ENCODE measurements at regions of chr2 and their contacts with region 1.

Region 1: DNA sequence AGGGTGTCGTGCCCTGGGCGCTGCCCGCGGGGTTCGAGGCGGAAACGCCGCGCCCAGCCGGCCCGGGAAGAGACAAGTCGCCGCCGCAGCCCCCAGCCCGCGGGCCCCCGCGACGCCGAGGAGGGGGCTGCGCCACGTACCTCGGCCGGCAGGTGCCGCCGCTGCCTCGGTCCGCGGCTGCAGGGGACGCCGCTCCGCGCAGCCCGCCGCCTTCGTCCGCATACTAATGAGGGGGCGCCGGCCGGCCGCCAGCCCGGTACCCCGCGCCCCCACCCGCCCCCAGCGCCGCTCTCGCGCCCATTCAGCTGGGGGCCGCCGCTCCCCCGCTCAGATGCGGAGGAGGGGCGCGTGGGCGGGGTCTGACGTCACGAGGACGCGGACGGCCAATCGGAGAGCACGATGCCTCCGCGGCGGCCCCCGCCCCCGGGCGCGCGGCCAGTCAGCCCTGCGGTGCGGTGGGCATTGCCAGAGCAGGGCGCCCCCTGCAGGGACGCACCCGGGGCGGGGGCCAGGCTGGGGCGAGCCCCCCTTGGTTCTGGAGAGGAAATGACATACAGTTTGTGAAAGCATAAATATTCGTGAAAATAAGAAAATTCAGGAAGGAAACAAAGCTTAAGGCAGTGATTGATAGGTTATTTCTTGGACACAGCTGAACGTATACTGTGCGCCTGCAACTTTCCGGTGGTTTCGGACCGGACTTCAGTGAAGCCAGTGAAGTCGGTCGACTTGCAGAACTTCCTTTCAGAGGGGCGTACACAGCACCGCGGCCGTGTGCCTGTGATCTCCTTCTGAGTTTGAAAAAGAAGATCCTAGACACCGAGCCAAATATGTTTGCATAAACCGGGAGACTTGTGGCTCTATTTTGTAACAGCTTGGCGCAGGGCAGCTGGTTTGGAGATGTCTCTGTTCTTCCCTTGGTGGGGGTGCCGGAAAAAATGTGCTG is at the start of gene ST3GAL5:
- DNase-seq: peak; percentile 84 to 97 (median 92)
- ATAC-seq: peak; percentile 81
- H3K4me3 ChIP-seq: peak within 1 kb of the TSS; percentile 88
- H3K4me3 Mint-ChIP-seq: peak within 1 kb of the TSS; percentile 98
- H3K27ac ChIP-seq: peak within 1 kb of the TSS; percentile 69 to 81
- H3K27ac Mint-ChIP-seq: peak within 1 kb of the TSS; percentile 95
- H3K4me1 ChIP-seq: peaks cover 47% of the 10 kb centered on the region
- H3K4me1 Mint-ChIP-seq: peaks cover 65% of the 10 kb centered on the region
- H3K27me3 ChIP-seq: no peaks in the 10 kb centered on the region
- H3K27me3 Mint-ChIP-seq: no peaks in the 10 kb centered on the region
- CTCF ChIP-seq: peak; percentile 87
- total RNA-seq, gene ST3GAL5: 76.7 to 77.8 TPM

Region 2: DNA sequence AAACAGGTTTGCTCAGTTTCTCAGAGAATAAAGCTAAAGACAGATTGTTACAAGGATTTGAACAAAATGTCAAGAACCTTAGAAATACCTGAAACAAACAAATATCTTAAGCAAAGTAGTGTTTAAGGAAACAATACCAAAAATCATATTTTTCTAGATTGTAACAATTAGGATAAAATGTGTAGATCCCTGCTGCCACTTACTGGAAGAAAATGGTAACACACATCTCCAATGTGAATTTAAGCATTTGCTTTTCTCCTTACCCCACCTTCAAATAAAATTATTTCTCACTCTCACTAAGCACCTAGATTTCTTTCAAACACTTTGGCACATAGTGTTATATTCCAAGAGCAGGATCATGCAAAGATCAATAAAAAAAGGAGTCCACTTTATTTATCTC is 1464.8 kb before region 1 on chr2:
- CTCF ChIA-PET with region 1: no interaction called
- POLR2A ChIA-PET with region 1: no interaction called
- intact Hi-C with region 1: no loop called
- DNase-seq: peak in 2 of 14 experiments; percentile 6 to 9
- ATAC-seq: no peak
- H3K4me3 ChIP-seq: no peak overlapping the region
- H3K4me3 Mint-ChIP-seq: no peak overlapping the region
- H3K27ac ChIP-seq: no peak overlapping the region
- H3K27ac Mint-ChIP-seq: peak overlapping the region; percentile 0
- H3K4me1 ChIP-seq: no peaks in the 10 kb centered on the region
- H3K4me1 Mint-ChIP-seq: no peaks in the 10 kb centered on the region
- H3K27me3 ChIP-seq: no peaks in the 10 kb centered on the region
- H3K27me3 Mint-ChIP-seq: no peaks in the 10 kb centered on the region
- CTCF ChIP-seq: peak; percentile 49

Region 3: GRCh38 chr2:85826990-85827878 is 61.7 kb before region 1 on chr2:
- CTCF ChIA-PET with region 1: interaction called, 71 read pairs
- POLR2A ChIA-PET with region 1: interaction called, 38 read pairs
- intact Hi-C with region 1: loop called (anchors 1 to 2 kb)
- DNase-seq: peak; percentile 74 to 90 (median 81)
- ATAC-seq: peak; percentile 100
- H3K4me3 ChIP-seq: no peak overlapping the region
- H3K4me3 Mint-ChIP-seq: no peak overlapping the region
- H3K27ac ChIP-seq: peak overlapping the region in 1 of 2 donors; percentile 5
- H3K27ac Mint-ChIP-seq: peak overlapping the region; percentile 49
- H3K4me1 ChIP-seq: peaks cover 10% of the 10 kb centered on the region
- H3K4me1 Mint-ChIP-seq: peaks cover 22% of the 10 kb centered on the region
- H3K27me3 ChIP-seq: no peaks in the 10 kb centered on the region
- H3K27me3 Mint-ChIP-seq: peaks cover 3% of the 10 kb centered on the region
- CTCF ChIP-seq: peak; percentile 92

Region 4: DNA sequence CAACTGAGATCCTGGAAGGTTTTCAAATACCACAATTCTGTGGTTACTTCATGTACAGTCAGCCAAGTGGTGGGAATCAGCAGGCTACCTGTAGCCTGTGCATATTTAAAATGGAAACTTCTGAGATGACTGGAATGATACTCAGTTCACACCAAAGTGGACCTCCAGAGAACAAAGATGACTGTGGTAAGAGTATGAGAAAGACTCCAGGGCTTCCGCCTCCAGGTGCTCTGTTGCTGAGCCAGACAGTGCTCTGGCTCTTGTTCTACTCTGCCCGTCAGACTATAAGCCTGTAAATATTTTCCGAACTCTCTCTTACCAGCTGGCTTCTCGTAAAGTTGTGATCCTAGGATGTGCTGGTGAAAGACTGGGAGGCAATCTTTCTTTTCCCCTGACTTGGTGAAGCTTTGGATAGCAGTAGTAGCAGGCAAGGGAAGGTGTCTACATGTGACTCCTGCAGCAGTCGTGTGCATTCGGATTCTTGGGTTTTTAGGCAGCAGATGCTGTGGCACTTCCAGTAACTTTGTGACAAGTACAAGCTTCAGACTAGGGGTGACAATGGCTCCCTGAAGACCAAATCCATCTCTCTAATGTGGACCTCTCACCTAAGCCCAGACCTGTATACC is 23.3 kb before region 1 on chr2:
- CTCF ChIA-PET with region 1: interaction called, 11 read pairs
- POLR2A ChIA-PET with region 1: interaction called, 20 read pairs
- intact Hi-C with region 1: no loop called
- DNase-seq: peak in 2 of 14 experiments; percentile 17 to 19
- ATAC-seq: peak; percentile 36
- H3K4me3 ChIP-seq: no peak overlapping the region
- H3K4me3 Mint-ChIP-seq: no peak overlapping the region
- H3K27ac ChIP-seq: peak overlapping the region in 1 of 2 donors; percentile 10
- H3K27ac Mint-ChIP-seq: peak overlapping the region; percentile 56
- H3K4me1 ChIP-seq: peaks cover 34% of the 10 kb centered on the region
- H3K4me1 Mint-ChIP-seq: peaks cover 63% of the 10 kb centered on the region
- H3K27me3 ChIP-seq: no peaks in the 10 kb centered on the region
- H3K27me3 Mint-ChIP-seq: no peaks in the 10 kb centered on the region
- CTCF ChIP-seq: no peak

Region 5: DNA sequence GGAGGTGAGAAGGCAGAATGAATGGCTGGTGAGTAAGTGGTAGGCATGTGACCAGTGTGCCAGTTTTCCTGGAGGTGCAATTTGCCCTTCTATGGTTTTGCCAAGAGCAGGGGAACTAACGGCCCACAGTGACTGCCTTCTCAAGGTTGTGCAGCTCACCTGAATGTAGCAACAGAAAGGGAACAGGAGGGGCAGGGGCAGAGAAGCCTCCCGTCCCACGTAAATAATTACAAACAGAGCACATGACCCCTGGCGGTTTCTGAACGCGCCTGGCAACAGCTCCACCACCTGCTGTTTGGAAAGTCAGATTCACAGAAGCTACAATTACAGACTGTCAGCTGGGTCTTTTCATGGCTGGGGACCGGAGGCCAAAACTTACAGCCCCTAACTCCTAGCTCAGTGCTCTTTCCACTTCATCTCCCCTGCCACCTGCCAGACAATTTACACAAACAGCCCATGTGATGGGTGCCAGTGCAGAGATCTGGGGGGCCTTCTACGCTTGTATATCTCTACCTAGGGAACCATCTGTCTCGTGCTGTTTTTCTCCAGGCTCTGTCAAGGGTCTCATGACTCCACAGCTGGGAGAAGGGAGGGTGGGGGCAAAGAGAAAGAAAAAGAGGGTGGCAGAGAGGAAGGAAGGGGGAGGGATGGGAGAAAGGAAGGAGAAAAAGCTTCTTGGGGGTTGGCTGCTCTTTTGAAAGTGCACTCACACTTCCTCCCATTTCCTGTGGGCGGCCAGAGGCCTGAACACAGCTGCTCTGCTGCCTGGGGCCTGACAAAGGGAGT is 147.1 kb after region 1 on chr2:
- CTCF ChIA-PET with region 1: interaction called, 52 read pairs
- POLR2A ChIA-PET with region 1: interaction called, 75 read pairs
- intact Hi-C with region 1: loop called (anchors 1 to 2 kb)
- DNase-seq: peak; percentile 47 to 91 (median 68)
- ATAC-seq: peak; percentile 53
- H3K4me3 ChIP-seq: peak overlapping the region; percentile 29
- H3K4me3 Mint-ChIP-seq: peak overlapping the region; percentile 78
- H3K27ac ChIP-seq: peak overlapping the region; percentile 88 to 92
- H3K27ac Mint-ChIP-seq: peak overlapping the region; percentile 97
- H3K4me1 ChIP-seq: peaks cover 92% of the 10 kb centered on the region
- H3K4me1 Mint-ChIP-seq: peaks cover 72% of the 10 kb centered on the region
- H3K27me3 ChIP-seq: no peaks in the 10 kb centered on the region
- H3K27me3 Mint-ChIP-seq: peaks cover 3% of the 10 kb centered on the region
- CTCF ChIP-seq: peak; percentile 46

Region 6: DNA sequence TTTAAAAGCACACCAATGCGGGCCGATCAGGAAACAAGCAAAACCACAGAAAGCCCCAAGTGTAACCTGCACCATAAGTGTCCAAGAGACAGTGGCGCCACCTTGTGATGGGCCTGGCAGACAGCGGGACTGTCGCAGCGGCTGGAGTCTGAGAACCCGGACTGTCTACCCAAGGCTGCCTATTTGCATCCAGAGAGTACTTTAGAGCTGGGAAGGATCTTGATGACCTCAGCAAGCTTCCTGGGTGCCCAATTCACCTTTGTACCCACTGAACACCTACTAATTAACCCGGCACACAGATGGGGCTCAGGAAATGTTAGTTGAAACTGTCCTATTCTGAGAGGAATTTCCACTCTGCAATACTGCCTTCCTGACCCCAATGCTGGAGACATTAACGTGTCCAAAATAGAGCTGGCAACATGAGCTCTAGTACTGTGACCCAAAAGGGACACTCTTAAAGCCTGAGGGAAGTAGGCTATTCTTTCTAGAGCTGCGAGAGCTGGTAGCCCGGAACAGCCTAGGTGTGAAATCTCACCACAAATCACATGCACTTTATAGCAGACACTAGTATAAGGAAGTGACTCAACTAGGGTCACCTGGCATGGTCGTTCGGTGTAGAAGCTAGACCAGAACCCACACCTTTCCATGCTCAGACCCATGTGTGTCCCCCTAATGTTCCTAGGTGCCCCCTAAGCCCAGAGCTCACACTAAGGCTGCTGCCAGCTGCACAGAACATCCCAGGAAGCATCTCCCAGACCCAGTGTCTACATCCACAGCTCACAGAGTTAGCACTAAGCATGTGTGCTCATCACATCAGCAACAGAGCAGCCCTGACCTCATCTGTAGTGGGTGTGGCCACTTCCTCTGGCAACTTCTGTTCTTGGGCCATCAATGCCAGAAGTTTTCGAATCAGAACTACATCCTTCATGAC is 191.3 kb after region 1 on chr2:
- CTCF ChIA-PET with region 1: interaction called, 62 read pairs
- POLR2A ChIA-PET with region 1: interaction called, 27 read pairs
- intact Hi-C with region 1: loop called (anchors 1 to 2 kb)
- DNase-seq: peak; percentile 73 to 90 (median 82)
- ATAC-seq: peak; percentile 81
- H3K4me3 ChIP-seq: no peak overlapping the region
- H3K4me3 Mint-ChIP-seq: peak overlapping the region; percentile 31
- H3K27ac ChIP-seq: peak overlapping the region; percentile 16 to 56
- H3K27ac Mint-ChIP-seq: peak overlapping the region; percentile 87
- H3K4me1 ChIP-seq: peaks cover 26% of the 10 kb centered on the region
- H3K4me1 Mint-ChIP-seq: peaks cover 26% of the 10 kb centered on the region
- H3K27me3 ChIP-seq: no peaks in the 10 kb centered on the region
- H3K27me3 Mint-ChIP-seq: no peaks in the 10 kb centered on the region
- CTCF ChIP-seq: peak; percentile 78

Measured in CD4-positive, alpha-beta T cell (primary cell).